ENCODE measurements at regions of chr16 and their contacts with region 1.

Region 1: DNA sequence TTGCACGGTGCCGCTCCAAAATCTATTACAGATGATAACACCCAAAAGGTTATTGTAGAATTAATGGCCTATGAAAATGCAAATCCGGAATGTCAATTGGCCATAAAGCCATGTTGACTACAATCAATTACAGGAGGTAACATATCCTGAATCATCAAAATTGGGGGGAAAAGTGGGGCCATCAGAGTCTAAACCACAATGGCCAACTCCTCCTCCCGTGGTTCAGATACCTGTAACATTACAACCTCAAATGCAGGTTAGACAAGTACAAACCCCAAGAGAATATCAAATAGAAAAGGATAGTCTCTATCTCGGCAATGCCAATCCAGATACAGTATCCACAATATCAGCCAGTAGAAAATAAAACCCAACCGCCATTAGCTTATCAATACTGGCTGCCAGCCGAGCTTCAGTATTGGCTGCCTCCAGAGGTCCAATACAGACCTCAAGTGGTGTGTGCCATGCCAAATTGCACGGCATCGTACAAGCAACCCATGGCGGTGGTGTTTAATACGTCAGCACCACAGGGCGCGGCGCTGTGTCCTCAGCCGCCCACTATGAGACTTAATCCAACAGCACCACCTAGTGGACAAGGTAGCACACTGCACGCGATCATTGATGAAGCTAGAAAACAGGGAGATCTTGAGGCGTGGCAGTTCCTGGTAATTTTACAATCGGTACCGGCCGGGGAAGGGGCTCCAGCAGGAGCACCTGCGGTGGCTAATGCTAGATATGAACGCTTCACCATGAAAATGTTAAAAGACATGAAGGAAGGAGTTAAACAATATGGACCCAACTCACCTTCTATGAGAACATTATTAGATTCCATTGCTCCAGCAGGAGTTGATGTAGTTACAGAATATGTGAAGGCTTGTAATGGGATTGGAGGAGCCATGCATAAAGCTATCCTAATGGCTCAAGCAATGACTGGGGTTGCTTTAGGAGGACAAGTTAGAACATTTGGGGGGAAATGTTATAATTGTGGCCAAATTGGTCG is 15.2 kb downstream of the FLYWCH1 start:
- DNase-seq: peak; percentile 53
- H3K4me3 ChIP-seq: peak overlapping the region; percentile 3; the same call in 1 of the 2 replicates
- H3K27ac ChIP-seq: no peak overlapping the region
- H3K27me3 ChIP-seq: no peaks in the 10 kb centered on the region
- CTCF ChIP-seq: peak; percentile 86

Region 2: DNA sequence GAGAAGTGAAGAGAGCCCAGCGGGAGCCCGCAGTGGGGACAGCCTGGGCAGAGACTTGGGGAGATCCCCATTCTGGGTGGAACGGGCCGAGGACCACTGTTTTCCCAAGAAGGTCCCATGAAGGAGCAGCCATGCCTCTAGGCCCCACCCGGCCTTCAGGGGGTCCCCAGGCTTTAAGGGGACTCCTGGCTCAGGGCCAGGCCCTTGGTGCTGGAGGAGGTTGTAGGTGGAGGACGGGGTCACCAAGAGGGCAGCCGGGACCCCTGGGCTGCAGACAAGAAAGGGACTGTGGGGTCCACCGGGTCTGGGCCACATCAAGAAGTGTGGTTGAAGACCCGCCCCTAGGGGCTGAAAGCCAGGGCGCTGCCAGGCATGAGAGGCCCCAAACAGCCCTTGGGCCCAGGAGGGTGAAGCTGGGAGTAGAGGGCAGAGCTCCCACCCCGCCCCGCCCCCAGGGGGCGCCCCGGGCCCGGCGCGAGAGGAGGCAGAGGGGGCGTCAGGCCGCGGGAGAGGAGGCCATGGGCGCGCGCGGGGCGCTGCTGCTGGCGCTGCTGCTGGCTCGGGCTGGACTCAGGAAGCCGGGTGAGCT is 110.1 kb before region 1 on chr16 and contains the start of gene PRSS21:
- CTCF ChIA-PET with region 1: no interaction called
- POLR2A ChIA-PET with region 1: no interaction called
- DNase-seq: no peak
- H3K4me3 ChIP-seq: no peak within 1 kb of the TSS
- H3K27ac ChIP-seq: no peak within 1 kb of the TSS
- H3K27me3 ChIP-seq: peaks cover 31% of the 10 kb centered on the region
- CTCF ChIP-seq: 0 out of 2 replicates have a peak, but pooled peaks have one; percentile 9
- polyA plus RNA-seq, gene PRSS21: 0.17 and 0.47 TPM in 2 replicates

Region 3: DNA sequence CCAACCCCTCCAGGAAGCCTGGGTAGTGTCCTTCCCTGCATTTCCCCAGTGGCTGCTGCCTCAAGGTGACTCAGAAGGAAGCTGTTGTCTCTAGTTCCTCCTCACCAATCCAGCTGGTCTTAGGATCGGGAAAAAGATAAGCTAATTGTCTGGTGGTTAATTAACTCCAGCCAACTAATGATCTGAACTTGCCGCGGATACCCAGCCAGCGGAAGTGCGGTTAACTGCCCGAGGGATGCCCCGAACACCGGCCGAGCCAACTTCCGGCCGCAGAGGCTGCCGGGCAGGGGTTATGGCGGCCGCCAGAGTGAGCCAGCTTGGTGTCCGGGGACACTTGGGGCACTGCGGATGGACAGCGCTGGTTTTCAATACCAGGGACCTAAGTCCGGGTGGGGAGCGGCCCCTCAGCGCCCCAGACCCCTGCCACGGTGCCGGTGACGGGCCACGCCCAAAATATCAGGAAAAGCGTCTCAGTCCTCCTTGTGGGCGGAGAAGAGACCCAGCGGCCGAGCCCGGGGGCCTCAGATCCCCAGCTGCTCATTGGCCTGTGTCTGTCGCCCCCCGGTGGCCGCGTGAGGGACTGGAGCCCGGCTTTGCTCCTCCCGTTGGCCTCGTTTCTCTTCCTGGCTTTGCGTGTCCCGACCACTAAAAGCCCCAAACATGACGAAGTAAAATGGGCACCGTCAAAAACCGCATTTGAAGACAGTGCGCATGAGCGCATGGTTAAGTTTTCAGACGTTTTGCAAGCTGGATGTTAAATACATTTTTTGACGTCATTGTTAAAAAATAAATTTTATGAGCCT is 58.8 kb before region 1 on chr16:
- CTCF ChIA-PET with region 1: interaction called, 15 read pairs
- POLR2A ChIA-PET with region 1: no interaction called
- DNase-seq: peak; percentile 84
- H3K4me3 ChIP-seq: peak overlapping the region; percentile 66
- H3K27ac ChIP-seq: peak overlapping the region; percentile 89
- H3K27me3 ChIP-seq: no peaks in the 10 kb centered on the region
- CTCF ChIP-seq: peak; percentile 94

Region 4: GRCh38 chr16:2874912-2875362 is 52.0 kb before region 1 on chr16:
- CTCF ChIA-PET with region 1: interaction called, 15 read pairs
- POLR2A ChIA-PET with region 1: no interaction called
- DNase-seq: no peak
- H3K4me3 ChIP-seq: no peak overlapping the region
- H3K27ac ChIP-seq: no peak overlapping the region
- H3K27me3 ChIP-seq: peaks cover 2% of the 10 kb centered on the region
- CTCF ChIP-seq: peak; percentile 91

Region 5: DNA sequence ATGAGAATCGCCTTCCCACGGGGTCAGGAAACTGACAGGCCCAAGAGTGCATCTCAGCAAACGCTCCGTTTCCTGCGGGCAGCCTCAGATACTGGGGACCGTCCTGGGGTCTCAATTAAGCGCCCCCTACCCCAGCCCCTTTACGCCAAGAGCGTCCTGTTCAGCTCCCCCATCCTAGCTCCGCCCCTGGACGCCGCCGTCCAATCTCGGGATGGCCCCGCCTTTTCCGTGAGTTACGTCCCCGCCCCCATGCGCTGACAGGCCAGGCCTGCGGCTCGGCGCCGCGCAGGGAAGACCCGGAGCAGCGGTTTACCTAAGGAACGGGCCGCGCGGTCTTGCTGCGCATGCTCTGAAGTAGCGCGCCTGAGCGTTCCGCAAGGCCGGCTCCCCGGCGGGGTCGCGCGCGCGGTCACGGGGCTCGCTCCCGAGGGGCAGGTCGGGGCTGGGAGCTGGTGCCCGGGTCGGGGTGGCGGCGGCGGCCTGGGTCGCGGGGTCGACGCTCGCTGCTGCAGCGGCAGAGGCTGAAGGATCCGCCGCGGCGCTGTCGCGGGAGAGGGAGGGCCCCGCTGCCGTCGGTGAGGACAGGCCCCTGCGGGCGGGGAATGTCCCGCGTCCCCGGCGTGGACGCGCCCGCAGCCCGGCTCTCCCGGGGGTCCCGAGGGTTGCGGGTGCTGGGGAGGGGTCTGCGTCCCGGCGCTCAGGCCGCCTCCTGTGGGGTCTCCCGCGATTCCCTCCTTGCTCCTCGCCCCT is 15.2 kb before region 1 on chr16 and contains the start of gene FLYWCH1:
- CTCF ChIA-PET with region 1: interaction called, 12 read pairs
- POLR2A ChIA-PET with region 1: no interaction called
- DNase-seq: peak; percentile 94
- H3K4me3 ChIP-seq: peak within 1 kb of the TSS; percentile 91
- H3K27ac ChIP-seq: peak within 1 kb of the TSS; percentile 91
- H3K27me3 ChIP-seq: no peaks in the 10 kb centered on the region
- CTCF ChIP-seq: no peak
- polyA plus RNA-seq, gene FLYWCH1: 15.1 and 19.8 TPM in 2 replicates

Region 6: DNA sequence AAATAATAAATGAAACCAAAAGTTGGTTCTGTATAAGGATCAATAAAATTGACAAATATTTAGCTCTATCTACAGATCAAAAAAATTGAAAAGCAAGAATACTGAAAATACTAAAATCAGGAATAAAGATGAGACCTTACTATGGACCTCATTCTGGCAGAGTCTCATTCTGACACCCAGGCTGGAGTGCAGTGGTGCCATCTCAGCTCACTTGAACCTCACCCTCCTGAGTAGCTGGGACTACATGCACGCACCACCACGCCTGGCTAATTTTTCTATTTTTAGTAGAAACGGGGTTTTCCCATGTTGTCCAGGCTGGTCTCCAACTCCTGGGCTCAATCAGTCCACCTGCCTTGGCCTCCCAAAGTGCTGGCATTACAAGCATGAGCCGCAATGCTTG is 15.1 kb after region 1 on chr16:
- CTCF ChIA-PET with region 1: interaction called, 29 read pairs
- POLR2A ChIA-PET with region 1: no interaction called
- DNase-seq: no peak
- H3K4me3 ChIP-seq: no peak overlapping the region
- H3K27ac ChIP-seq: no peak overlapping the region
- H3K27me3 ChIP-seq: no peaks in the 10 kb centered on the region
- CTCF ChIP-seq: no peak

Measured in AG04450 (cell line).